ENCODE measurements at regions of chr6 and their contacts with region 1.

Region 1: DNA sequence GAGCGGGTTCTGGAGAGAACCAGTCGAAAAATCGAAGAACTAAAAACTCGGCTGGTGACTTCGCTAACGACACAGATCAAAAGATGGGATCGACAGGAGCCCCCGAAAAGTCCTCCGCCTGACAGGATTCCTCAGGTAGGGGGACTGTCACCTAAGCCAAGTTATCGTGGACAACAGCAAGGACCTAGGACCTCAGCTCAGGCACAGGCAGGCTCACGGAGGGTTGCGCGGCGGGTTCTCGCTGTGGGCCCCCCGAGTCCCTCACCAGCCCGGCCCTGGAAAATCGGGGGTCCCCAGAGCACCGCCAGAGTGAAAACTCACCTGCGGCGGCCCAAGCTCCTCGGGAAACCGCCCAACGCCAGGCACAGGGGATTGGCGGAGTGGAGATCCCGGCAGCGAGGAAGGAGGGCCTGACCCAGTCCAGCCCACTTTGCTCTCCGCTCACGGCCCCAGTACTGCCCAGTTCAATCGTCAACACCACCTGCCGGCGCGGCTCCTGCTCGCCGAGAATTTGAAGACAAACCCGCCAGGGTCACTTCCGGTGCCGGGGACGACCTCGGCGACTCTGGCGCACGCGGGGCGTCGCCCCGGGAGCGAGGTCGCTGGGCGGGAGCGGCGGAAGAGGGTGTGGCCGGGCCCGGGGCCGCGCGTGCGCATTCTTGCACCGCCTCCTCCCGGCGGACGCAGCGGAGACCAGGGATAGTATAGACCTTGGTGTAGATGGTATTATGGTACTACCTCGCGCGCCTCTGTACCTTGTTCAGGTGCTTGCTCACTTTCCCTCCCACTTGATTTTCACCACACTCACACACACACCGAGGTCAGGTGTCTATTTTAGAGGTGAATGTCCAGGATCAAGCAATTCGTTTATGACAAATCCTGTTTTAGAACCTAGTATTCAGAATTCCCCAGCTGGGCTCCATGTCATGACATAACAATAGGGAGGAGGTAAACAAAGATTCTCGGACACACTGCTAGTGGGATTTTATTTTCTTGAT is at the start of gene KATNA1:
- DNase-seq: peak; percentile 67 to 94 (median 86)

Region 2: DNA sequence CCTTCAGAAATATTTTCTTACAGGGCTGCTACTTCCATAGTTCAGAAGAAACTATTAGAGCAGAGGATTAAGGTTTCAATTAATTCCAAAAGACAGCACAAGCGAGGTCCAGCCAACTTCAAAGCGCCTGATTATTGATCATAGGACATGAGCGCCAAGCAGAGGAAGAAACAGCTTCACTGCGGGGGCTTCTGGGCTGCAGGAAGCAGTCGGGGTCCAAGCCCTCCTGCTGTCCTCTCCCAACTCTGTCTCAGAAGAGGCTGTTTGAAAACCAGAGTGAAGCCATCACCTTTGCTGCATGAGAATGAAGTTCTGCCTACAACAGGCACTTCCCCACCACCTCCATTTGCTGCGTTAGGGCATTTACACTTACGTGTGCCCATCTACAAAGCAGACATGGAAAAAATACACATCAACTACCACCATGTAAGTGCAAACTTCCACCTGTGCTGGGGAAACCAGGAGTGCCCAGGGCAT is 224.4 kb before region 1 on chr6:
- intact Hi-C with region 1: no loop called
- DNase-seq: no peak

Region 3: GRCh38 chr6:149545754-149546528 is 102.5 kb before region 1 on chr6 and contains the start of gene PPIL4:
- intact Hi-C with region 1: loop called (anchors 2 kb)
- DNase-seq: peak; percentile 83 to 98 (median 96)

Region 4: GRCh38 chr6:149565527-149566409 is 82.7 kb before region 1 on chr6 and contains the start of gene GINM1:
- intact Hi-C with region 1: loop called (anchors 5 kb)
- DNase-seq: peak; percentile 84 to 97 (median 93)